Gastrocnemius medialis (tissue), 4 donors: ENCODE measurements at regions of chr3 and their contacts with region 1.

Region 1: DNA sequence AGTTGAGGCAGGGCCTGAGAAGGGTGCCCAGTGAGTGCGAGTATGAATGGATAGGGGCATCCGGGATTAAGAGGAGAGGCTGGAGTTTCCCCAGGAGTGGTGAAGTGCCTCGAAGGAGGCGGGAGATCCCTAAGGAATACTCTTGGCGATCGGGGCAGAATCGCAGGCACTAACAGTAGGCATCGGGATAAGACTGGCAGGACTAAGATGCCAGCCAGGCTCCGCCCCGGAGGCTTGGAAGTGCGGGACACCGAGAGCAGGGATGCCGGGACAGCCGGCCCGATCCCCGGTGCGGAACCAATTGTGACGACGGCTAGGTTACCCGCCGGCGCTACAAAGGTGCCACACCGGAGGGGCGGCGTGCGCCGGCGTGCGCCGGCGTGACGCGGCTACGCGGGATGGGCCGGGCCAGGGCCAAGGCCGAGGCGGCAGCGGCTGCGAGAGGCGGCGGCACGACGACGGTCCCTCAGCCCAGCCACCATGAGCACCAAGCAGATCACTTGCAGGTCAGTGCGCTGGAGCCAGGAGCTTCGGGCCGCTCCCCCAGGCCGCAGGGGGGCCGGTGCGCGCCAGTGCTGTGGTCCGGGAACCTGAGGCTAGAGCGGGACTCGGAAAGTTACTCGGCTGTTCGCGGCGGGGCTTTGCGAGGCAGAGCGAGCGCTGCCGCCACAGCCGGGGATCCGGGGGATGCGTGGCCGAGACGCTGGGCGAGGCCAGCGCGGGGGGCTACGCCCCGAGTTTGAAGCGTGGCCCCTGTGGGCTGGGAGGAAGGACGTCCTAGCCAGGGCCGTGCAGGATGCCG is at the start of gene MKRN2:
- DNase-seq: peak; percentile 74 to 84
- ATAC-seq: peak; percentile 80 to 81
- H3K4me3 ChIP-seq: peak within 1 kb of the TSS; percentile 75 to 99 (median 94)
- H3K27ac ChIP-seq: peak within 1 kb of the TSS; percentile 96 to 99 (median 98)
- H3K4me1 ChIP-seq: peaks cover 52 to 55% of the 10 kb centered on the region in 2 donors
- H3K27me3 ChIP-seq: peaks cover 15 to 26% (median 17%) of the 10 kb centered on the region in 3 donors
- CTCF ChIP-seq: peak in 2 of 5 experiments; percentile 35 to 40
- POLR2A ChIP-seq: peak; percentile 99
- total RNA-seq, gene MKRN2: 14.8 to 29.9 (median 25.1) TPM

Region 2: DNA sequence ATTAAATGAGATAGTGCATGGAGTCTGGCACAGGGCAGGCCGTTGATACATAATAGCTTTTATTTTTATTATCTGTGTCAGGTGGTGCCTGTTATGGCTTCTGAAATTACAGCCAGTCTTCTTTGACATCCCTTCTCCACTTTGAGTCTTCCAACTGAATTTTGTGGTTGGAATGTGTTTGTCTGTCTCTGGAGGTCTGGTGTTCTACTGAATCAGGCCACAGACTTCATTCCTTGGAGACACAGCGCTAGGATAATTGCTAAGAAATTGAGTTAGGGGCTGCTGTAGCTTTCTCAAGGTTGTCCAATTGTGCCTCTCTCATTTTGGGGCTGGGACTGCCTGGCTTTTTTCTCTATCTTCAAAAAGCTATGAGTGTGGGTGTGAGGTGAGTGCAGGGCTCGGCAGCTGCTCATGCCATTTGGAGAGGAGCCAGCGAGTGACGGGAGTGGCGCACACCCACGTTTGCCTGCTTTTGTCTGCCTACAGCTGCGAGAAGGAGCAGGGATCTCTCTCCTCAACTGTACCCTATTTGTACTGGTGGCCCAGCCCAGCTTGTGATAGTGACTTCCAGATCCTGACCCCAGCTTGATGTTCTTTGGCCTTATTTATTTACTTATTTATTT is 602.4 kb before region 1 on chr3:
- in situ Hi-C with region 1: no loop called
- intact Hi-C with region 1: no loop called
- DNase-seq: no peak
- ATAC-seq: no peak
- H3K4me3 ChIP-seq: no peak overlapping the region
- H3K27ac ChIP-seq: no peak overlapping the region
- H3K4me1 ChIP-seq: no peaks in the 10 kb centered on the region
- H3K27me3 ChIP-seq: peaks cover 0 to 2% (median 0%) of the 10 kb centered on the region in 3 donors
- CTCF ChIP-seq: no peak
- POLR2A ChIP-seq: no peak

Region 3: DNA sequence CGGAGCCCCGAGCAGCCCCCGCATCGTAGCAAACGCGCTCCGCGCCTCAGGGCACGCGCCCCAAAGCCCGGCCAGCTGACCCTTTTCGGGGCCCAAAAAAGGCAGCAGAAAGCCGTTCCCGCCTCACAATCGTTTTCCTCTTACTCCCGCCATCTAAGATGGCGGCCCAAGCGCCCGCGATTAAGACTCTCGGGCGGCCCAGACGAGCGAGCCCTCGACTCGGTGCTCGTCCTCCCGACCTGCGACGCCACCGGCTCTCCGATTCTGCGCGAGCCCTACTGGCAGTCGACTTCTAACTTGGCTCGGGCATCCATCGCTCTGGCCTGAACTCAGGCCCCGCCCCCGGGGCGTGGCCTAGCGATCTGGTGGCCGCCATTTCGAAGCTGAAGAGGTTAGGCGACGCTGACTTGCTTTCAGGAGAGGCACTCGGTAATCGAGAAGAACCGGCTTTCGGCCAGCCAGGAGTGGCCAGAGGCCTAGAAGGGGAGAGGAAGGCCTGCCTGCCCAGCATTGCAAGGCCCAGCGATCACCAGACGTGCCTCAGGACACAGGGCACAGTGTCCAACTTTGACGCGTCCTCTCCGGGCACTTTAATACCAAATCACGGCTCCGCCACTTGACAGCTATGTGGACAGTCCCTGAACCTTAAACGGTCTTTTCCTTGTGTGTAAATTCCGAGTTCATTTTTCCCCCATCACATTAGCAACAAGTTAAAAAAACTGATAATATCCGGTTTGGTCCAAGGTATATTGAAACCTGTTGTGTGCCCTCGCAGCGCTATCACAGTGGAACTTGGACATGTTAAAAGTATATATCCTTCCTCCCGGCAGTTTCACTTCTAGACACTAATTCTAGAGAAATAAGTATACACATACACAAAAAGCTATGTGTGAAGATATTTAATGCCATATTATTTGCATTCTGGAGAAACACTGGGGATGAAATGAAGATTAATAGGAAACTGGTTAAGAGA is 107.3 kb after region 1 on chr3 and contains the start of gene RAF1:
- in situ Hi-C with region 1: no loop called
- intact Hi-C with region 1: loop called (anchors 2 kb)
- DNase-seq: peak; percentile 97 to 99
- ATAC-seq: peak; percentile 76 to 83
- H3K4me3 ChIP-seq: peak within 1 kb of the TSS; percentile 96 to 100 (median 98)
- H3K27ac ChIP-seq: peak within 1 kb of the TSS; percentile 99 to 100 (median 100)
- H3K4me1 ChIP-seq: peaks cover 29 to 37% of the 10 kb centered on the region in 2 donors
- H3K27me3 ChIP-seq: no peaks in the 10 kb centered on the region
- CTCF ChIP-seq: no peak
- POLR2A ChIP-seq: peak; percentile 87 to 95
- total RNA-seq, gene RAF1: 212 to 346 (median 246) TPM

Region 4: DNA sequence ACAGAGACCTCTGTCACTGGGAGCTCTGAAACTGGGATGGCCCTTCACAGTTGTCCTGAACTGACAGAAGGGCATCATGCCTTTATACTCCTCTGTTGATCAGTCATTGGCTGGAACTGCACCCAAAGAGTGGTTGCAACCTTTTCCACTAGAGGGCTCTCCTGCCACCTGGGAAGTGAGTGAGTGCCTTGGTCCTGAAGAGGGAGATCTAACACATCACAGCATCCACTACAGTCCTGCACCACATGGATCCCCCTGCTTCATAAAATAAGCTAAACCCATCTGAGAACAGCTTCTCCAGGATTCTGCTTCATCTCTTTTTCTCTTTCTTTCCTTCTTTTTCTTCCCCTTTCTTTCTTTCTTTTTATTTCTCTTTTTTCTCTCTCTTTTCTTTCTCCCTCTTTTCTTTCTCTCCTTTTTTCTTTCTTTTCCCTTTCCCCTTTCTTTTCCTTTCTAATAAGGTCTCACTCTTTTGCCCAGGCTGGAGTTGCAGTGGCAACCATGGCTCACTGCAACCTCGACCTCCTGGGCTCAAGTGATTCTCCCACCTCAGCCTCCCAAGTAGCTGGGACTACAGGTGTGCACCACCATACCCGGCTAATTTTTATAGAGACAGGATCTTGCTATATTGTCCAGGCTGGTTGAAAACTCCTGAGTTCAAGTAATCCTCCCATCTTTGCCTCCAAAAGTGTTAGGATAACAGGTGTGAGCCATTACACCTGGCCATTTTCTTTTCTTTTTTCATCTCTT is 149.8 kb after region 1 on chr3:
- in situ Hi-C with region 1: loop called in 1 of 4 experiments (anchors 25 kb)
- intact Hi-C with region 1: loop called (anchors 5 kb)
- DNase-seq: peak; percentile 36 to 76
- ATAC-seq: peak; percentile 78 to 89
- H3K4me3 ChIP-seq: no peak overlapping the region
- H3K27ac ChIP-seq: peak overlapping the region in 2 of 4 donors; percentile 21 to 49
- H3K4me1 ChIP-seq: peaks cover 11 to 27% of the 10 kb centered on the region in 2 donors
- H3K27me3 ChIP-seq: no peaks in the 10 kb centered on the region
- CTCF ChIP-seq: peak; percentile 38 to 76 (median 64)
- POLR2A ChIP-seq: no peak

Region 5: DNA sequence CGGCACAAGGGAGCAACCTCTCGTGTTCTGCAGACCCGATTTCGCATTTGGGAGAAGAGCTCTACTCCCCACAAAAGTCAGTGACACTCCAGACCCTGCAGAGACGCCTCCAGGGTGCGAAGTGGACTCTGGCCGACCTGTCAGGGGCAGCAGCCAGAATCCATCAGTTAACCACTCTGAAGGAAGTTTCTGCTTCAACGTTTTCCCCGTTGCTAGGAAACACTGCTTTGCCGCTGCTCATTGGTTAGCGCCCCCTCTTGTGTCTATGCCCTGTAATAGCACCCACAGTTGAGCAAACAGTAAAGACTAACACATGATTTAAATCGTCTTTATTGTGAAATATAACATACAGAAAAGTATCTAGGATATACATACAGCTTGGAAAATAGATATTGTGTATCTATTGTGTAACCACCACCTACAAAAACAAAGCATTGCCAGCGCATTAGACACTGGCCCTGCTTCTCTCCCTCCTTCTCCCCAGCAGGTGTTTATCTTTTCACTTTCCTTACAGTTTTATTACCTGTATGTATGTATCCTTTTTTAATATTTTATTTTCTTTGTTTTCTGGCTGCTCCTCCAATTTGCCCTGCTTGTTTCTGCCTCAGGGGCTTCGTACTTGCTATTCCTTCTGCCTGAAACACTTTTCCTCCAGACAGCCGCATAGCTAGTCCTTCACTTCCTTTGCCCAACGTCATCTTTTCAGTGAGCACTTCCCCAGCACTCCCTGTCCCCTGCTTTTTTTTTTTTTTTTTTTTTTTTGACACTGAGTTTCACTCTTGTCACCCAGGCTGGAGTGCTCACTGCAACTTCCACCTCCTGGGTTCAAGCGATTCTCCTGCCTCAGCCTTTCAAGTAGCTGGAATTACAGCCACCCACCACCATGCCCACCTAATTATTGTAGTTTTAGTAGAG is 163.4 kb after region 1 on chr3:
- in situ Hi-C with region 1: loop called in 1 of 4 experiments (anchors 25 kb)
- intact Hi-C with region 1: no loop called
- DNase-seq: peak; percentile 45 to 60
- ATAC-seq: peak; percentile 90 to 96
- H3K4me3 ChIP-seq: peak overlapping the region; percentile 21 to 52 (median 46)
- H3K27ac ChIP-seq: peak overlapping the region; percentile 0 to 35 (median 25)
- H3K4me1 ChIP-seq: peaks cover 3 to 4% of the 10 kb centered on the region in 2 donors
- H3K27me3 ChIP-seq: no peaks in the 10 kb centered on the region
- CTCF ChIP-seq: peak; percentile 83 to 93 (median 85)
- POLR2A ChIP-seq: no peak

Region 6: GRCh38 chr3:12796171-12797123 is 239.6 kb after region 1 on chr3 and contains the start of gene CAND2:
- in situ Hi-C with region 1: no loop called
- intact Hi-C with region 1: loop called (anchors 1 kb)
- DNase-seq: peak; percentile 72 to 85
- ATAC-seq: peak; percentile 14 to 28
- H3K4me3 ChIP-seq: peak within 1 kb of the TSS; percentile 70 to 88 (median 82)
- H3K27ac ChIP-seq: peak within 1 kb of the TSS; percentile 99 to 100 (median 99)
- H3K4me1 ChIP-seq: peaks cover 32 to 39% of the 10 kb centered on the region in 2 donors
- H3K27me3 ChIP-seq: no peaks in the 10 kb centered on the region
- CTCF ChIP-seq: no peak
- POLR2A ChIP-seq: peak; percentile 91 to 93
- total RNA-seq, gene CAND2: 133 to 308 (median 181) TPM

Region 7: GRCh38 chr3:13025094-13025493 is 468.2 kb after region 1 on chr3:
- in situ Hi-C with region 1: no loop called
- intact Hi-C with region 1: no loop called
- DNase-seq: no peak
- ATAC-seq: no peak
- H3K4me3 ChIP-seq: no peak overlapping the region
- H3K27ac ChIP-seq: no peak overlapping the region
- H3K4me1 ChIP-seq: peaks cover 24 to 29% of the 10 kb centered on the region in 2 donors
- H3K27me3 ChIP-seq: no peaks in the 10 kb centered on the region
- CTCF ChIP-seq: no peak
- POLR2A ChIP-seq: no peak

Region 8: GRCh38 chr3:13073326-13074005 is 516.6 kb after region 1 on chr3 and contains the start of gene IQSEC1:
- in situ Hi-C with region 1: no loop called
- intact Hi-C with region 1: no loop called
- DNase-seq: no peak
- ATAC-seq: no peak
- H3K4me3 ChIP-seq: no peak within 1 kb of the TSS
- H3K27ac ChIP-seq: no peak within 1 kb of the TSS
- H3K4me1 ChIP-seq: peaks cover 12 to 14% of the 10 kb centered on the region in 2 donors
- H3K27me3 ChIP-seq: peaks cover 14 to 21% (median 16%) of the 10 kb centered on the region in 3 donors
- CTCF ChIP-seq: no peak
- POLR2A ChIP-seq: no peak
- total RNA-seq, gene IQSEC1: 15.2 to 31.3 (median 28.0) TPM